Dorsolateral prefrontal cortex (tissue), 120 donors: ENCODE measurements at regions of chr20 and their contacts with region 1.

Region 1: DNA sequence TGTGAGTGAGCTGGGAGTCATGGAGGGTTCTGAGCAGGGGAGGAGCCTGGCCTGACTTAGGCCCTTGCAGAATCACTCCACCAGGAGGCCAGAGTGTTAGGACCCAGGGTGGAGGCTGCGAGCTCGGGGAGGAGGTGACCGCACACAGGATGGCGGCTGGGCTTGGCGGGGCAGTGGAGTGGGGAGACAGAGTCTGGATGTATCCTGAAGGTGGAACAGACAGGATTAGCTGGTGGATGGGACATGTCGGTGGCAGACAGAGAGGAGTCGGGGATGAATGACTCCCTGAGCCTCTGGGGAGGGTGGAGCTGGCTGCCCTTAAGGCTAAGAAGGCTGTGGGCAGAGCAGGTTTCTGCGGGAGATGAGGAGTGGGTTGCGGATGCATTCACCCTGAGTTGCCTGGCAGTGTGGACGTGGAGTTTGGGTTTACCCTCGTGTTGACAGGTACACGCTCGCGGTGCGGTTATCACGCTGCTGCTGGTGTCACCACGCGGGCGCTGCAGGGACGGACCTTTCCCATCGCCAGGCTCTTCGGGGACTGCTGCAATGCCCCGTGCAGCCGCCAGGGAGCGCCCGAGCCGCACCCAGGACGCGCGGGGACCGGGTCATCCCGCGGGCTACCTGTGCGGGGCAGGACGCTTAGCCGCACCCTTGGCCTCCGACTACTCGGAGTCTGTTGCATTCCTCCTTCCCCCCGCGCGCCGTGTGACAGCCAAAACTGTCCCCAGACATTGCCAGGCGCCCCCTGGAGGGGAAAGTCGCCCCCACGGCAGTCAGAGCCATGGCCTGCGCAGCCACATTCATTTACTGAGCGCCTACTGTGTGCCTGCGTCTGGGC is 43.0 kb upstream of the PTGIS start:
- DNase-seq: peak; percentile 63 to 88 (median 77)
- H3K4me3 ChIP-seq: peak overlapping the region in 57 of 59 donors; percentile 3 to 62 (median 39)
- H3K27ac ChIP-seq: peak overlapping the region in 21 of 59 donors; percentile 1 to 83 (median 66)
- H3K27me3 ChIP-seq: peaks cover 0 to 3% (median 0%) of the 10 kb centered on the region in 45 donors
- CTCF ChIP-seq: peak; percentile 88 to 100 (median 99)

Region 2: DNA sequence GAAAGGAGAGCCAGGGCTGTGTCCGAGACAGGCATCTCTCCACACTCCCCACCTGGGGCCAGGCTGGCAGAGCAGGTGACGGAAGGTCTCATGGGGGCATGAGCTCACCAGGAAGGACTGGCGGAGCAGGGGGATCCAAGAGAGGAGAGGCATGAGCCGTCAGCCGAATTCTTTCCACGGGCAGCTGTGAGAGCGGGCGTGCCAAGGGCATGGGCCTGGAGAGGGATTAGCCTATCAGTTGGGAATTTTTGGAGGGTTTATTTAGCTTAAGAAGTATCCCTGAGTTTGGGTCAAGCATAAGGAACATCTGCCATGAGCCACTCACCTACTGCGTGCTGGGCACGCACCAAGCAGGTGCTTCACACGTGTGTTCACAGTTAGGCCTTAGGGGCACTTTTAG is 272.9 kb before region 1 on chr20:
- intact Hi-C with region 1: loop called (anchors 5 to 10 kb)
- DNase-seq: no peak
- H3K4me3 ChIP-seq: no peak overlapping the region
- H3K27ac ChIP-seq: no peak overlapping the region
- H3K27me3 ChIP-seq: no peaks in the 10 kb centered on the region
- CTCF ChIP-seq: no peak

Region 3: GRCh38 chr20:49635166-49635565 is 24.2 kb after region 1 on chr20:
- intact Hi-C with region 1: loop called in 1 of 2 experiments (anchors 2 kb)
- DNase-seq: peak in 6 of 10 donors; percentile 23 to 56 (median 34)
- H3K4me3 ChIP-seq: no peak overlapping the region
- H3K27ac ChIP-seq: peak overlapping the region in 28 of 59 donors; percentile 6 to 63 (median 39)
- H3K27me3 ChIP-seq: no peaks in the 10 kb centered on the region
- CTCF ChIP-seq: no peak

Region 4: GRCh38 chr20:49768204-49769047 is 157.5 kb after region 1 on chr20:
- intact Hi-C with region 1: loop called (anchors 1 to 5 kb)
- DNase-seq: no peak
- H3K4me3 ChIP-seq: no peak overlapping the region
- H3K27ac ChIP-seq: peak overlapping the region in 25 of 59 donors; percentile 1 to 77 (median 34)
- H3K27me3 ChIP-seq: no peaks in the 10 kb centered on the region
- CTCF ChIP-seq: no peak

Region 5: GRCh38 chr20:49846206-49846807 is 235.4 kb after region 1 on chr20:
- intact Hi-C with region 1: loop called (anchors 2 kb)
- DNase-seq: peak in 3 of 10 donors; percentile 22 to 61 (median 57)
- H3K4me3 ChIP-seq: no peak overlapping the region
- H3K27ac ChIP-seq: peak overlapping the region in 1 of 59 donors; percentile 63
- H3K27me3 ChIP-seq: no peaks in the 10 kb centered on the region
- CTCF ChIP-seq: peak; percentile 49 to 86 (median 73)

Region 6: GRCh38 chr20:49888345-49888966 is 277.5 kb after region 1 on chr20:
- intact Hi-C with region 1: loop called (anchors 1 kb)
- DNase-seq: peak; percentile 79 to 90 (median 86)
- H3K4me3 ChIP-seq: peak overlapping the region in 8 of 59 donors; percentile 3 to 33 (median 13)
- H3K27ac ChIP-seq: peak overlapping the region; percentile 81 to 100 (median 96)
- H3K27me3 ChIP-seq: no peaks in the 10 kb centered on the region
- CTCF ChIP-seq: peak; percentile 79 to 97 (median 90)